ENCODE measurements at regions of chr17 and their contacts with region 1.

Region 1: DNA sequence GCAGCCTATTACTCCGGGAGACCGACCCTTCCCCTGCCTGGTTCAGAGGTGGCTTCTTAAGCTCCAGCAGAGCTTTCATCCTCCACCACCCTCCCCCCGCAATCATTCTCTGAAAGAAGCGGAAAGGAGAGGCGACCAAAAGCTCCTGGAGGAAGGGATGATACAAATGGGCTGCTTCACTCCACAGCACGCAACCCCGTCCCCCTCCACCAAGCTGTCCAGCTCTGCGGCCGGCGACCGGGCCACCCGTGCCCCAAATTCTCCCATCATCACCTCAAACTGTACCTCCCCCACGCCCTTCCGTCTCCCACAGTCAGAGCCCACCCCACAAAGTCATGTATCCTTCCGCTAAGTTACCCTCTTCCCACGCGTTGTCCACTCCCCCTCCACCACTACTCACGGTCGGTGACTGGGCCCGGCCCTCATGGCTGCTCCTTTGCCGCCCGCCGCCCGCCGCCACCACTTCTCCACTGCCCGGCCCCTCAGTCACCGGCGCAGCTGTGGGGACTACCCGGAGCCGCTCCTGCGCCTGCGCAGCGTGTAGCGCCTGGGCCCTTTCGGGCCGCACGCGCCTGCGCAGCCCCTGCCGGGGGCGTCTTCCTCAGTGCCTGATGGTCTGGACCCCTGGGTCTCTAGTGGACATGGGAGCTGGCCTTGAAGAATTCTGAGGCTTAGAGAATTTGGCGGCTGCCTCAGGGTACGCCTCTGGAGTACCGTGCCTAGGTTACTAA is at the start of gene FAM222B:
- DNase-seq: peak; percentile 93
- ATAC-seq: peak; percentile 99
- H3K4me3 Mint-ChIP-seq: peak within 1 kb of the TSS; percentile 93
- H3K27ac Mint-ChIP-seq: peak within 1 kb of the TSS; percentile 90
- H3K4me1 Mint-ChIP-seq: peaks cover 20% of the 10 kb centered on the region
- H3K27me3 Mint-ChIP-seq: no peaks in the 10 kb centered on the region
- total RNA-seq, gene FAM222B: 16.8 to 20.8 TPM

Region 2: GRCh38 chr17:28750178-28751047 is 92.0 kb before region 1 on chr17:
- CTCF ChIA-PET with region 1: interaction called, 10 read pairs
- POLR2A ChIA-PET with region 1: interaction called, 3 read pairs
- intact Hi-C with region 1: loop called in 1 of 2 experiments (anchors 5 kb)
- DNase-seq: peak; percentile 96
- ATAC-seq: peak; percentile 87
- H3K4me3 Mint-ChIP-seq: no peak overlapping the region
- H3K27ac Mint-ChIP-seq: peak overlapping the region; percentile 60
- H3K4me1 Mint-ChIP-seq: peaks cover 43% of the 10 kb centered on the region
- H3K27me3 Mint-ChIP-seq: no peaks in the 10 kb centered on the region

Region 3: GRCh38 chr17:28878981-28879380 is 36.5 kb after region 1 on chr17:
- CTCF ChIA-PET with region 1: interaction called, 4 read pairs
- POLR2A ChIA-PET with region 1: no interaction called
- intact Hi-C with region 1: loop called in 1 of 2 experiments (anchors 2 kb)
- DNase-seq: peak; percentile 55
- ATAC-seq: no peak
- H3K4me3 Mint-ChIP-seq: no peak overlapping the region
- H3K27ac Mint-ChIP-seq: no peak overlapping the region
- H3K4me1 Mint-ChIP-seq: peaks cover 31% of the 10 kb centered on the region
- H3K27me3 Mint-ChIP-seq: no peaks in the 10 kb centered on the region

Region 4: DNA sequence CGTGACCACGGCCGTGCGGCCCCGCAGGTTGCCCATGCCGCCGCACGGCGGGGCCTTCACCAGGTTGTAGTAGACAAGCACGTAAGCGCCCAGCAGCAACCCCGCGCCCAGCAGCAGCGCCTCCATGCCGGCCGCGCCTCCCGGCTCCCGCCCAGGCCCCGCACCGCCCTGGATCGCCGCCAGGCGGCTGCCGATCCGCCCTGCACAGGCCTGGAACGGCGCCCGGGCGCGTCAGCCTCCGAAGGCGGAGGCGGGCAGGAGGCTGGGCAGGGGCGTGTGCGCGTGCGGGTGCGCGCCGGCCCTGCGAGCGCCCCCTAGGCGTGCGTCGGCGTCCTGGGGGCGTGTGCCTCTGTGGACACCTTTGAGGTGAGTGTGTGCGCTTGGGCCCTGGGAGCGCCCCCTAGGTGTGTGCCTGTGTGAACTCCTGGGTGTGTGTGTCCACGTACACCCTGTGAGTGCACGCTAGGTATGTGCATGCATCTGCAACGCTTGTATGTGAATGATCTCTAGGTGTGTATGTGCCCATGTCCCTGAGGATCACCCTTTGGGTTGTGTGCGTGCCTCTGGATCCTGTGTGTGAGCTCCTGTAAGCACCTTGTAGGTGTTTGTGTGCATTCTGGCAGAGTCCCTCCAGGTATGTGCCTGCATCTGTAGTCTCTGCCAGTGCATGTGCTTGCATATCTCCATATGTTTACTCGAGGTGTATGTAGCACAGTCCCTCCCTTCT is 60.5 kb after region 1 on chr17 and contains the start of gene DHRS13:
- CTCF ChIA-PET with region 1: interaction called, 6 read pairs
- POLR2A ChIA-PET with region 1: no interaction called
- intact Hi-C with region 1: loop called in 1 of 2 experiments (anchors 1 kb)
- DNase-seq: peak; percentile 97
- ATAC-seq: peak; percentile 89
- H3K4me3 Mint-ChIP-seq: peak within 1 kb of the TSS; percentile 87
- H3K27ac Mint-ChIP-seq: peak within 1 kb of the TSS; percentile 92
- H3K4me1 Mint-ChIP-seq: peaks cover 34% of the 10 kb centered on the region
- H3K27me3 Mint-ChIP-seq: no peaks in the 10 kb centered on the region
- total RNA-seq, gene DHRS13: 23.3 to 29.5 TPM

Region 5: DNA sequence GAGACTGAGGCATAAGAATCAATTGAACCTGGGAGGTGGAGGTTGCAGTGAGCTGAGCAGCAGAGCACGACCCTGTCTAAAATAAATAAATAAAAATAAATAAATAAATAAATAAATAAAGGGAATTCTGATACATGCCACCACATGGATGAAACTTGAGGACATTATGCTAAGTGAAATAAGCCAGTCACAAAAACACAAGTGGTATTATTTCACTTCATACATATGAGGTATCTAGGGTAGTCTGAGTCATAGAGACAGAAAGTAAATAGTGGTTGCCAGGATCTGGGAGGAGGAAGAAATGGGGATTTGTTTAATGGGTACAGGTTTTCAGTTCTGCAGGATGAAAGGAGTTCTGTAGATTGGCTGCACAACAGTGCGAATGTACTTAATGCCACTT is 216.8 kb after region 1 on chr17:
- CTCF ChIA-PET with region 1: no interaction called
- POLR2A ChIA-PET with region 1: no interaction called
- intact Hi-C with region 1: no loop called
- DNase-seq: no peak
- ATAC-seq: no peak
- H3K4me3 Mint-ChIP-seq: no peak overlapping the region
- H3K27ac Mint-ChIP-seq: no peak overlapping the region
- H3K4me1 Mint-ChIP-seq: peaks cover 6% of the 10 kb centered on the region
- H3K27me3 Mint-ChIP-seq: no peaks in the 10 kb centered on the region